GM12878 (cell line): ENCODE measurements at regions of chr12 and their contacts with region 1.

Region 1: GRCh38 chr12:14948672-14949071 is 10.3 kb upstream of the ERP27 start:
- DNase-seq: peak; percentile 90
- ATAC-seq: peak; percentile 84
- H3K4me3 ChIP-seq: peak overlapping the region; percentile 57
- H3K27ac ChIP-seq: peak overlapping the region; percentile 100
- H3K4me1 ChIP-seq: peaks cover 46% of the 10 kb centered on the region
- H3K27me3 ChIP-seq: no peaks in the 10 kb centered on the region
- CTCF ChIP-seq: no peak
- EP300 ChIP-seq: peak; percentile 16 to 42; a peak in 2 of 4 replicates
- POLR2A ChIP-seq: peak; percentile 79
- RAD21 ChIP-seq: no peak

Region 2: GRCh38 chr12:14394317-14395073 is 554.2 kb before region 1 on chr12:
- CTCF ChIA-PET with region 1: no interaction called
- POLR2A ChIA-PET with region 1: no interaction called
- RAD21 ChIA-PET with region 1: no interaction called
- SMC1A ChIA-PET with region 1: no interaction called
- in situ Hi-C with region 1: loop called (anchors 25 kb)
- intact Hi-C with region 1: loop called (anchors 5 kb)
- DNase-seq: peak; percentile 65
- ATAC-seq: peak; percentile 77
- H3K4me3 ChIP-seq: 0 out of 2 replicates have a peak overlapping the region, but pooled peaks have one; percentile 18
- H3K27ac ChIP-seq: peak overlapping the region; percentile 82
- H3K4me1 ChIP-seq: peaks cover 11% of the 10 kb centered on the region; the same call in 1 of the 2 replicates
- H3K27me3 ChIP-seq: no peaks in the 10 kb centered on the region
- CTCF ChIP-seq: no peak; a peak in 1 of 6 replicates
- EP300 ChIP-seq: no peak
- POLR2A ChIP-seq: 0 out of 2 replicates have a peak, but pooled peaks have one; percentile 22
- RAD21 ChIP-seq: no peak

Region 3: DNA sequence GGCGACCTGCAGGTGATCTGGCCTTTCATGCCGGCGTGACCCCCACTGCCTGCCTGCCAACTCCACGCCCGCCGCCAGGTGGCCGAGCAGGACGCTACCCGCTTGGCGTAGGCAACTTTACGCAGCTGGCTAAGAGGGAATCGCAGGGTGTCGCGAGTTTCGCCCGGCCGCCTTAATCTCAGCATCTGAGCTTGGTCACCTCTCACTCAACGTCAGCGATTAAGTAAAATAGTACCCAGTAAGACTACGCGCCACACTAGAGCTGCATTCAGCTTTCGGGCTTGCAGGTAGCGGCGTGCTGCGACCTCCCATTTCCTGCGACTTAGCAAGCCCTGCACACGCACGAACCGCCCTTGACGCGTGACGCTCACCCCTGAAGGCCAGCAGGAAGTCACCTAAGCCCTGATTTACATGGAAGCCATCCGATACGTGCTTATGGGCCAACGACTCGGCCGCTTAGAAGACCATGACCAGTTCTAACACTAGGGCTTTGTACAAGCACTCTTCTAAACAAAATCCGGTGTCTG is 178.6 kb before region 1 on chr12:
- CTCF ChIA-PET with region 1: interaction called, 4 read pairs
- POLR2A ChIA-PET with region 1: interaction called, 13 read pairs
- RAD21 ChIA-PET with region 1: interaction called, 7 read pairs
- SMC1A ChIA-PET with region 1: interaction called, 13 read pairs
- in situ Hi-C with region 1: loop called (anchors 10 kb)
- intact Hi-C with region 1: no loop called
- DNase-seq: peak; percentile 84
- ATAC-seq: peak; percentile 63
- H3K4me3 ChIP-seq: peak overlapping the region; percentile 83
- H3K27ac ChIP-seq: peak overlapping the region; percentile 99
- H3K4me1 ChIP-seq: peaks cover 2% of the 10 kb centered on the region
- H3K27me3 ChIP-seq: no peaks in the 10 kb centered on the region
- CTCF ChIP-seq: peak; percentile 81 to 87 (median 87)
- EP300 ChIP-seq: peak; percentile 11 to 58; a peak in 3 of 4 replicates
- POLR2A ChIP-seq: peak; percentile 89
- RAD21 ChIP-seq: peak; percentile 37; the same call in 1 of the 2 replicates

Region 4: GRCh38 chr12:14960548-14961465 is 12.1 kb after region 1 on chr12:
- CTCF ChIA-PET with region 1: interaction called, 8 read pairs
- POLR2A ChIA-PET with region 1: interaction called, 20 read pairs
- RAD21 ChIA-PET with region 1: interaction called, 25 read pairs
- SMC1A ChIA-PET with region 1: interaction called, 33 read pairs
- in situ Hi-C with region 1: no loop called
- intact Hi-C with region 1: loop called (anchors 2 kb)
- DNase-seq: no peak
- ATAC-seq: peak; percentile 61
- H3K4me3 ChIP-seq: peak overlapping the region; percentile 80
- H3K27ac ChIP-seq: peak overlapping the region; percentile 94
- H3K4me1 ChIP-seq: peaks cover 5% of the 10 kb centered on the region
- H3K27me3 ChIP-seq: no peaks in the 10 kb centered on the region
- CTCF ChIP-seq: no peak
- EP300 ChIP-seq: peak; percentile 19 to 51; a peak in 1 of 4 replicates
- POLR2A ChIP-seq: no peak
- RAD21 ChIP-seq: no peak

Region 5: DNA sequence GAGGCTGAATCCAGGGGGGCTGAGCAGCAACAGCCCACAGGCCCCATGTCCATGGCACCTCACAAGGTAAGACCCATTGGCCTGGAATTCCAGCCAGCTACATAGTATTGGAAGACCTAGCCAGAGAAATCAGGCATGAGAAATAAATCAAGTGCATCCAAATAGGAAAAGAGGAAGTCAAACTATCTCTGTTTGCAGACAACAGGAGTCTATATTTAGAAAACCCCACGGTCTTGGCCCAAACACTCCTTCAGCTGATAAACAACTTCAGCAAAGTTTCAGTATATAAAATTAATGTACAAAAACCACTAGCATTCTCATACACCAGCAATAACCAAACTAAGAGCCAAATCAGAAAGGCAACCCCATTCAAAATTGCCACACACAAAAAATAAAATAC is 41.1 kb after region 1 on chr12:
- CTCF ChIA-PET with region 1: interaction called, 8 read pairs
- POLR2A ChIA-PET with region 1: interaction called, 3 read pairs
- RAD21 ChIA-PET with region 1: interaction called, 7 read pairs
- SMC1A ChIA-PET with region 1: interaction called, 6 read pairs
- in situ Hi-C with region 1: no loop called
- intact Hi-C with region 1: loop called (anchors 5 kb)
- DNase-seq: no peak
- ATAC-seq: peak; percentile 49
- H3K4me3 ChIP-seq: no peak overlapping the region
- H3K27ac ChIP-seq: peak overlapping the region; percentile 27
- H3K4me1 ChIP-seq: peaks cover 17% of the 10 kb centered on the region
- H3K27me3 ChIP-seq: no peaks in the 10 kb centered on the region
- CTCF ChIP-seq: no peak
- EP300 ChIP-seq: 0 out of 4 replicates have a peak, but pooled peaks of 1 of the 2 experiments have one; percentile 14
- POLR2A ChIP-seq: no peak
- RAD21 ChIP-seq: no peak